ENCODE measurements at regions of chr3 and their contacts with region 1.

Region 1: GRCh38 chr3:190345027-190345821 is 23.0 kb upstream of the CLDN1 start:
- DNase-seq: peak; percentile 98
- ATAC-seq: peak; percentile 96
- H3K4me3 ChIP-seq: peak overlapping the region; percentile 35 to 45 (median 38); a peak in 5 of 6 replicates
- H3K27ac ChIP-seq: peak overlapping the region; percentile 89
- H3K4me1 ChIP-seq: peaks cover 35% of the 10 kb centered on the region
- H3K27me3 ChIP-seq: no peaks in the 10 kb centered on the region
- CTCF ChIP-seq: no peak
- EP300 ChIP-seq: peak in 1 of 2 experiments; percentile 87; a peak in 1 of 4 replicates
- POLR2A ChIP-seq: peak in 1 of 2 experiments; percentile 42; a peak in 1 of 4 replicates
- RAD21 ChIP-seq: no peak

Region 2: DNA sequence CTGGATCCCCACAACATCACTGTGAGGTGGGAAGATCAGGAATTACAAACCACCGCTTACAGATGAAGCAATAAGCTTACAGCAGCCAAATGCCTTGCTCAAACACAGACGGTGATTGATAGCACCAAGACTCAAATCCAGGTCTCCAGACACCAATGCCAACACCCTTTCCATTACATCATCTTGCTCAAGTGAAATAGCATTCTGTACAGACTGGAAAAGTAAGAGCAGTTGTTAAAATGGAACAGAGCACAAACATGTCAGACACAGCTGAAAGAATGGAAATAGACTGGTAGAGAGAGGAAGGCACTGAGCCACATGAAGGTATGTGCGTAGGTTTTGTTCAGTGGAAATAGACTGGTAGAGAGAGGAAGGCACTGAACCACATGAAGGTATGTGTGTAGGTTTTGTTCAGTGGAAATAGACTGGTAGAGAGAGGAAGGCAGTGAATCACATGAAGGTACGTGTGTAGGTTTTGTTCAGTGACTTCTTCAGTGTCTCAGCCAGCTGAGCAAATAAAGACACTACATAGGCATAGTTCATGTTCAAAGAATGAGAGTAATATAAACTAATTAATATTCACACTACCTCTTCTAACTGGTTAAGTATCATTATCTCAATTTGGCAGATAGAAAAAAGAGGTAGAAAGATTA is 38.6 kb before region 1 on chr3:
- CTCF ChIA-PET with region 1: no interaction called
- POLR2A ChIA-PET with region 1: interaction called, 15 read pairs
- in situ Hi-C with region 1: no loop called
- intact Hi-C with region 1: no loop called
- DNase-seq: peak; percentile 55
- ATAC-seq: peak; percentile 69
- H3K4me3 ChIP-seq: peak overlapping the region in 1 of 3 experiments; percentile 45; a peak in 1 of 6 replicates
- H3K27ac ChIP-seq: peak overlapping the region; percentile 80
- H3K4me1 ChIP-seq: peaks cover 68% of the 10 kb centered on the region
- H3K27me3 ChIP-seq: no peaks in the 10 kb centered on the region
- CTCF ChIP-seq: no peak
- EP300 ChIP-seq: peak in 1 of 2 experiments; percentile 54; a peak in 1 of 4 replicates
- POLR2A ChIP-seq: no peak
- RAD21 ChIP-seq: no peak

Region 3: GRCh38 chr3:190330936-190331734 is 14.1 kb before region 1 on chr3:
- CTCF ChIA-PET with region 1: no interaction called
- POLR2A ChIA-PET with region 1: interaction called, 7 read pairs
- in situ Hi-C with region 1: no loop called
- intact Hi-C with region 1: loop called (anchors 1 kb)
- DNase-seq: peak; percentile 94
- ATAC-seq: peak; percentile 99
- H3K4me3 ChIP-seq: peak overlapping the region in 1 of 3 experiments; percentile 9; a peak in 1 of 6 replicates
- H3K27ac ChIP-seq: peak overlapping the region; percentile 79
- H3K4me1 ChIP-seq: peaks cover 59% of the 10 kb centered on the region
- H3K27me3 ChIP-seq: no peaks in the 10 kb centered on the region
- CTCF ChIP-seq: 0 out of 2 replicates have a peak, but pooled peaks have one; percentile 11
- EP300 ChIP-seq: peak; percentile 88 to 95
- POLR2A ChIP-seq: no peak
- RAD21 ChIP-seq: no peak

Region 4: DNA sequence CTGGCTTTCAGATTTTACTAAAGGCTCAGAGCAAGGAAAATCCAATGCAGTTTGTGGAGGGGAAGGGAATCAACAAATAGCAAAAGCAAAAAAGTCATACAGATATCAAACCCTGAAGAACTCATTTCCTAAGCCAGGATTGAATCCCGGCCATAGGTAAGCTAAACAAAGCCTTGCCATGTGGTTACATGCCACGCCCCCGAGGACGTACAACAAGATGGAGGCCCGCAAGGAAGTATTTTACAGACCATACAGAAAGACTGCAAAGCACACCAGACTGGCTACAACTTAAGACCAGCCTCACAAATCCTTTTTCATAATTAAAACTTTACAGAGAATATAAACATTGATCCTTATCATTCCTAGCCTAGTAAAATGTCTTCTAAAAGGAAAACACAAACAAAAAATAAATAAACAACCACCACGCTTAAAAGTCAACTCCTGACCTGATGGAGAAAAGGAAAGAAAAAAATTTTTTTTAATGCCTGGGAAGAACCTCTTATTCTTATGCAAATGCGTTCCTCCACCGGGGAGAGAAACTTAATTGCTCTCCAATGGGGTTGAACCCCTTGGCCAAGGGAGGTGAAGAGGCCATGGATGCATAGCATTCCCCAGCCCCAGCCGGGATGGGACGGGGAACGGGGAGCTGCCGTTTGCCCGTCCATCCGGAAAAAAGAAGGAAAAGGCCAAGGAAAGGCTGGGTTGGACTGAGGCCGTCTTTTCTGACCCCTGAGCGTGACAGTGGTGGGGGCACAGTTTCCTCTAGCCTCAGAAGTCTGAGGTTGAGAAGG is 207.9 kb after region 1 on chr3:
- CTCF ChIA-PET with region 1: no interaction called
- POLR2A ChIA-PET with region 1: no interaction called
- in situ Hi-C with region 1: no loop called
- intact Hi-C with region 1: no loop called
- DNase-seq: no peak
- ATAC-seq: no peak
- H3K4me3 ChIP-seq: no peak overlapping the region
- H3K27ac ChIP-seq: no peak overlapping the region
- H3K4me1 ChIP-seq: peaks cover 64% of the 10 kb centered on the region
- H3K27me3 ChIP-seq: no peaks in the 10 kb centered on the region
- CTCF ChIP-seq: no peak
- EP300 ChIP-seq: no peak
- POLR2A ChIP-seq: no peak
- RAD21 ChIP-seq: no peak

Measured in HepG2 (cell line).